H1 (cell line): ENCODE measurements at regions of chr5 and their contacts with region 1.

Region 1: GRCh38 chr5:178182158-178182876 is 4.9 kb downstream of the GMCL2 start:
- DNase-seq: no peak
- H3K4me3 ChIP-seq: no peak overlapping the region
- H3K27ac ChIP-seq: peak overlapping the region; percentile 15; the same call in 1 of the 2 replicates
- H3K4me1 ChIP-seq: peaks cover 2 to 25% (median 16%) of the 10 kb centered on the region in 4 experiments; a peak in 6 of 7 replicates
- H3K27me3 ChIP-seq: no peaks in the 10 kb centered on the region
- CTCF ChIP-seq: no peak
- EP300 ChIP-seq: no peak
- POLR2A ChIP-seq: no peak
- RAD21 ChIP-seq: no peak

Region 2: GRCh38 chr5:177973066-177973635 is 209.2 kb before region 1 on chr5:
- CTCF ChIA-PET with region 1: no interaction called
- POLR2A ChIA-PET with region 1: no interaction called
- DNase-seq: no peak
- H3K4me3 ChIP-seq: no peak overlapping the region
- H3K27ac ChIP-seq: no peak overlapping the region
- H3K4me1 ChIP-seq: no peaks in the 10 kb centered on the region
- H3K27me3 ChIP-seq: no peaks in the 10 kb centered on the region
- CTCF ChIP-seq: no peak
- EP300 ChIP-seq: no peak
- POLR2A ChIP-seq: no peak
- RAD21 ChIP-seq: no peak

Region 3: GRCh38 chr5:178113199-178113787 is 69.0 kb before region 1 on chr5 and contains the start of gene N4BP3:
- CTCF ChIA-PET with region 1: interaction called, 3 read pairs
- POLR2A ChIA-PET with region 1: interaction called, 16 read pairs
- DNase-seq: peak; percentile 44 to 88
- H3K4me3 ChIP-seq: peak within 1 kb of the TSS; percentile 54 to 98 (median 82)
- H3K27ac ChIP-seq: peak within 1 kb of the TSS; percentile 78; the same call in 1 of the 2 replicates
- H3K4me1 ChIP-seq: peaks cover 3 to 43% (median 31%) of the 10 kb centered on the region in 4 experiments
- H3K27me3 ChIP-seq: no peaks in the 10 kb centered on the region
- CTCF ChIP-seq: peak in 1 of 3 experiments; percentile 7; a peak in 1 of 4 replicates
- EP300 ChIP-seq: peak in 1 of 2 experiments; percentile 77; a peak in 1 of 3 replicates
- POLR2A ChIP-seq: peak in 1 of 2 experiments; percentile 67; a peak in 2 of 3 replicates
- RAD21 ChIP-seq: no peak; a peak in 1 of 4 replicates
- total RNA-seq, gene N4BP3: 36.0 and 39.2 TPM in 2 replicates

Region 4: GRCh38 chr5:178130604-178131485 is 51.5 kb before region 1 on chr5 and contains the start of gene RMND5B:
- CTCF ChIA-PET with region 1: no interaction called
- POLR2A ChIA-PET with region 1: interaction called, 13 read pairs
- DNase-seq: peak in 1 of 2 experiments; percentile 87
- H3K4me3 ChIP-seq: peak within 1 kb of the TSS; percentile 72 to 95 (median 78)
- H3K27ac ChIP-seq: peak within 1 kb of the TSS; percentile 86
- H3K4me1 ChIP-seq: peaks cover 4 to 17% (median 13%) of the 10 kb centered on the region in 4 experiments
- H3K27me3 ChIP-seq: no peaks in the 10 kb centered on the region
- CTCF ChIP-seq: peak in 1 of 3 experiments; percentile 11; a peak in 1 of 4 replicates
- EP300 ChIP-seq: peak in 1 of 2 experiments; percentile 95; a peak in 2 of 3 replicates
- POLR2A ChIP-seq: peak in 1 of 2 experiments; percentile 79; a peak in 2 of 3 replicates
- RAD21 ChIP-seq: no peak; a peak in 1 of 4 replicates
- total RNA-seq, gene RMND5B: 74.6 and 75.9 TPM in 2 replicates

Region 5: DNA sequence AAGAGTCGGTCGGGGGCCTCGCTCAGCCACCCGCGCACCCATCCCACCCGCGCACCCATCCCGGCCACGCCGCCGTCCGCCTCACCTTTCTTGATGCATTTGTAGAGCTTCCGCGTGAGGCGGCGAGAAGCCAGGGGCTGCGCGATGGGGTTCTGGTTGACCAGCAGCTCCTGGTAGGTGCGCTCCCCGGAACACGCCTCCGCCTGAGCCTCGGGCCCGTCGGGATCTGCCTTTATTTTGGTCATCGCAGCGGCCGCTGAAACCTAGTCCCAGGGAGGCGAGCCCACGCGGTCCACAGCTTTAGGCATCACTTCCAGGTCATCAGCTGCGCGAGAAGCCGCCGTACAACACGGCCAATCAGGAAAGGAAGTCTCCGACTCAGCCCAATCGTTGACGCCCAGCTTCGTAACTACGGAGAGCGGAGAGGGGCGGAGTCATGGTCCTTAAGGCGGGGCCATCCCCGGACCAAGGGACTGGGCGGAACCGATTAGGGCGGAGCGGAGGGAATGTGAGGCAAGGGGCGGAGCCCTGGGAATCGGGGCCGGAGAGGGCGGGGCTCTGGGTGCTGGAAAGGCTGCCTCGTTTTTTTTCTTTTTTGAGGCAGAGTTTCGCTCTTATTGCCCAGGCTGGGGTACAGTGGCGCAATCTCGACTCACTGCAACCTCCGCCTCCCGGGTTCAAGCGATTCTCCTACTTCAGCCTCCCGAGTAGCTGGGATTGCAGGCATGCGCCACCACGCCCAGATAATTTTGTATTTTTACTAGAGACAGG is 28.6 kb before region 1 on chr5 and contains the start of gene NHP2:
- CTCF ChIA-PET with region 1: no interaction called
- POLR2A ChIA-PET with region 1: interaction called, 14 read pairs
- DNase-seq: peak; percentile 95 to 99
- H3K4me3 ChIP-seq: peak within 1 kb of the TSS; percentile 81 to 89 (median 86)
- H3K27ac ChIP-seq: peak within 1 kb of the TSS; percentile 35; the same call in 1 of the 2 replicates
- H3K4me1 ChIP-seq: peaks cover 0 to 3% (median 2%) of the 10 kb centered on the region in 4 experiments; a peak in 4 of 7 replicates
- H3K27me3 ChIP-seq: no peaks in the 10 kb centered on the region
- CTCF ChIP-seq: no peak
- EP300 ChIP-seq: no peak
- POLR2A ChIP-seq: peak in 1 of 2 experiments; percentile 60; a peak in 2 of 3 replicates
- RAD21 ChIP-seq: no peak
- total RNA-seq, gene NHP2: 263 and 281 TPM in 2 replicates

Region 6: GRCh38 chr5:178170995-178171394 is 11.3 kb before region 1 on chr5:
- CTCF ChIA-PET with region 1: interaction called, 14 read pairs
- POLR2A ChIA-PET with region 1: interaction called, 21 read pairs
- DNase-seq: no peak
- H3K4me3 ChIP-seq: no peak overlapping the region
- H3K27ac ChIP-seq: no peak overlapping the region
- H3K4me1 ChIP-seq: peaks cover 0 to 12% (median 1%) of the 10 kb centered on the region in 4 experiments; a peak in 1 of 7 replicates
- H3K27me3 ChIP-seq: no peaks in the 10 kb centered on the region
- CTCF ChIP-seq: no peak
- EP300 ChIP-seq: no peak
- POLR2A ChIP-seq: no peak
- RAD21 ChIP-seq: no peak

Region 7: GRCh38 chr5:178204182-178204894 is 22.0 kb after region 1 on chr5 and contains the start of gene HNRNPAB:
- CTCF ChIA-PET with region 1: interaction called, 16 read pairs
- POLR2A ChIA-PET with region 1: interaction called, 985 read pairs
- DNase-seq: peak; percentile 85 to 97
- H3K4me3 ChIP-seq: peak within 1 kb of the TSS; percentile 93 to 100 (median 100)
- H3K27ac ChIP-seq: peak within 1 kb of the TSS; percentile 95
- H3K4me1 ChIP-seq: peaks cover 0 to 10% (median 4%) of the 10 kb centered on the region in 4 experiments; a peak in 5 of 7 replicates
- H3K27me3 ChIP-seq: no peaks in the 10 kb centered on the region
- CTCF ChIP-seq: no peak
- EP300 ChIP-seq: 0 out of 3 replicates have a peak, but pooled peaks of 1 of the 2 experiments have one; percentile 8
- POLR2A ChIP-seq: peak; percentile 99 to 100
- RAD21 ChIP-seq: no peak
- total RNA-seq, gene HNRNPAB: 556 and 563 TPM in 2 replicates